A549 (cell line): ENCODE measurements at regions of chr11 and their contacts with region 1.

Region 1: GRCh38 chr11:75896843-75897419 is 81.9 kb downstream of the UVRAG start:
- DNase-seq: peak; percentile 25 to 41
- ATAC-seq: peak; percentile 50; a peak in 4 of 6 replicates
- H3K4me3 ChIP-seq: no peak overlapping the region
- H3K27ac ChIP-seq: no peak overlapping the region
- H3K4me1 ChIP-seq: no peaks in the 10 kb centered on the region
- CTCF ChIP-seq: peak; percentile 81
- EP300 ChIP-seq: no peak
- POLR2A ChIP-seq: no peak
- RAD21 ChIP-seq: peak; percentile 87 to 91

Region 2: GRCh38 chr11:75743711-75744563 is 153.0 kb before region 1 on chr11:
- CTCF ChIA-PET with region 1: no interaction called
- POLR2A ChIA-PET with region 1: no interaction called
- DNase-seq: no peak
- ATAC-seq: no peak
- H3K4me3 ChIP-seq: no peak overlapping the region
- H3K27ac ChIP-seq: no peak overlapping the region
- H3K4me1 ChIP-seq: no peaks in the 10 kb centered on the region
- CTCF ChIP-seq: no peak
- EP300 ChIP-seq: no peak
- POLR2A ChIP-seq: no peak
- RAD21 ChIP-seq: no peak

Region 3: GRCh38 chr11:76120513-76121101 is 223.7 kb after region 1 on chr11:
- CTCF ChIA-PET with region 1: interaction called, 10 read pairs
- POLR2A ChIA-PET with region 1: no interaction called
- DNase-seq: no peak
- ATAC-seq: no peak
- H3K4me3 ChIP-seq: no peak overlapping the region
- H3K27ac ChIP-seq: no peak overlapping the region
- H3K4me1 ChIP-seq: no peaks in the 10 kb centered on the region
- CTCF ChIP-seq: no peak
- EP300 ChIP-seq: no peak
- POLR2A ChIP-seq: no peak
- RAD21 ChIP-seq: no peak

Region 4: DNA sequence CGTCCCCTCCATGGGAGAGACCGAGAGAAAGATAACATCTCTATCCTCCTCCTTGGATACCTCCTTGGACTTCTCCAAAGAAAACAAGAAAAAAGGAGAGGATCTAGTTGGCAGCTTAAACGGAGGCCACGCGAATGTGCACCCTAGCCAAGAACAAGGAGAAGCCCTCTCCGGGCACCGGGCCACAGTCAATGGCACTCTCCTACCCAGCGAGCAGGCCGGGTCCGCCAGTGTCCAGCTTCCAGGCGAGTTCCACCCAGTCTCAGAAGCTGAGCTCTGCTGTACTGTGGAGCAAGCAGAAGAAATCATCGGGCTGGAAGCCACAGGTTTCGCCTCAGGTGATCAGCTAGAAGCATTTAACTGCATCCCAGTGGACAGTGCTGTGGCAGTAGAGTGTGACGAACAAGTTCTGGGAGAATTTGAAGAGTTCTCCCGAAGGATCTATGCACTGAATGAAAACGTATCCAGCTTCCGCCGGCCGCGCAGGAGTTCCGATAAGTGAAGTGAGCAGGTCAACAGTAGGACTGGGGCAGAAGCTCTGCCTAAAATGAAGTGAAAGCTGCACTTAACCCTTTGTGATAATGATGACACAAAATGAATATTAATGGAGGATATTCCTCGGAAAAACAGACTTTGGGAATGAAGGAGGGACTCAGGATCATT is 244.1 kb after region 1 on chr11:
- CTCF ChIA-PET with region 1: interaction called, 50 read pairs
- POLR2A ChIA-PET with region 1: no interaction called
- DNase-seq: no peak
- ATAC-seq: no peak; a peak in 1 of 6 replicates
- H3K4me3 ChIP-seq: no peak overlapping the region
- H3K27ac ChIP-seq: no peak overlapping the region
- H3K4me1 ChIP-seq: no peaks in the 10 kb centered on the region
- CTCF ChIP-seq: no peak
- EP300 ChIP-seq: no peak
- POLR2A ChIP-seq: no peak
- RAD21 ChIP-seq: no peak

Region 5: DNA sequence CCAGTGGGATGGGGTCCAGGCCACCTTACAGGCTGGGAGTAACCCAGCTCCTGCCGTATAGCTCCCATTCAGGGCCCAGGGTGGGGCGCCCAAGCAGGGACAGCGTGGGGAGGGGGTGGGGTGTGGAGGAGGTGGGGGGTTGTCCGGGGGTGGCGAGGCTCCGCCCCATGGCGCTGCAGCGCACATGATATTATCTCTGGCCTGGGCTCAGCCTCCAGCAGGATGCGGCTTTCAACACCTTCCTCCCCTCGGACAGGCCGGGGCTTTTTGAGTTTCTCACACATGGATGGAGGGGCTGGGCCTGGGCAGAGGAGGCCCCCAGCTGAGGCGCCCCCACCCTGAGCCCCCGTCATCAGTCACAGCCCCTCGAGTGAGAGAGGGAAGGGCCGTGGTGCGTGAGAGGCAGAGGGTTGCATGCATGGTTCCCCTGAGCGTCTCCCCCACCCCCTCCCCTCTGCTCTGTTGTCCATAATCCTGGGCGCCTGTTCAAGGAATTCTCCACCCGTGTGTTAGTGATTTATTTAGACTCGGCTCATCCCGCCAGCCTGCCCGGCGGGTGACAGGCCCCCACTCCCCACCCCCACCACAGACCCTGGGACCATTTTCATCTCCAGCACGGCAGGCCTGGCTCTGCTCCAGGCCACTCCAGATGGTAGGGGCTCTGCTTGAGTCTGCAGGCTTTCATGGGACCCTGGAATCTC is 264.5 kb after region 1 on chr11:
- CTCF ChIA-PET with region 1: interaction called, 12 read pairs
- POLR2A ChIA-PET with region 1: no interaction called
- DNase-seq: no peak
- ATAC-seq: no peak
- H3K4me3 ChIP-seq: no peak overlapping the region
- H3K27ac ChIP-seq: no peak overlapping the region
- H3K4me1 ChIP-seq: no peaks in the 10 kb centered on the region
- CTCF ChIP-seq: no peak
- EP300 ChIP-seq: no peak
- POLR2A ChIP-seq: no peak
- RAD21 ChIP-seq: no peak

Region 6: DNA sequence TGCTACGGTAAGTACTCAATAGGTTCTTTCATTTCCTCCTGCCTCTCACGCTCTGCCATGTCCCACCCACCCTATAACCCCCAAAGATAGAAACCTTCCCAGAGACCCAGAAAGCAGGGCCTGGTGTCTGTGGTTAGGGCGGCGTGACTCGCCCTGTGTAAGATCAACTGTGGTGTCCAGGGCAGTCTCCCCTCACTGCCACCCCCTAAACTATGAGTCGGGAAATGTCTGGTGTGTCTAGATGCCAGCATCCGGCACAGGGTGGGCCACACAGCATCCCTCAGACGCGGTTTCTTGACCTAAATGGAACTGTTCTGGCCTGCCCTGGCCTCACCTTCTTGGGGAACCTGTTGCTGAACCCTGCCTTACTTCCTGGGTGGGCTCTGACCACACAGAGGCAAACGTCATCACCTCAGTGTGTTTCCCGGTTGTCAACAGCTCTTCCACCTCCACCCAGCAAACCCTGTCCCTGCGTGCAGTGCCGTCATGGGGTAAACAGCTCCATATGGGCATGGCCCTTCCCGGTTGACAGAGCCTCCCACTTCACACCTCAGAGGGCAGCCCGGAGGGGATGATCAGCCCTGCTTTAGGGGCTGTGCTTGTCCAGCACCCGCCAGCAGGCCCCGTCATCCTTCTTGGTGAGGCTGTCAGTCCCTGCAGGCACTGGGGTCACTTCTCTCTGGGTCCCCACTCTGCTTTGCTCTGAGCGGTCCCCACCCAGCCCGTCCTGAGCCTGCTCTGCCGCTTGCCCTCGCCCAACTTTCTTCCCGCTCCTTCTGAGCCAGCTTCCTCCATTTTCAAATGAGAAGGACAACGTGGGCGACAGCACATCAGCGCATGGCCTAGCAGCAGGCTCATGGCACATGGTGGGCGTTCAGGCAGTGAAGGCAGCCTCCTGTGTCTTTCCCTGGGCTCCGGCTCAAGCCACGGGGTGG is 303.3 kb after region 1 on chr11:
- CTCF ChIA-PET with region 1: interaction called, 48 read pairs
- POLR2A ChIA-PET with region 1: no interaction called
- DNase-seq: no peak
- ATAC-seq: no peak
- H3K4me3 ChIP-seq: no peak overlapping the region
- H3K27ac ChIP-seq: no peak overlapping the region
- H3K4me1 ChIP-seq: no peaks in the 10 kb centered on the region
- CTCF ChIP-seq: no peak
- EP300 ChIP-seq: no peak
- POLR2A ChIP-seq: no peak
- RAD21 ChIP-seq: no peak